ENCODE measurements at regions of chr1 and their contacts with region 1.

Region 1: DNA sequence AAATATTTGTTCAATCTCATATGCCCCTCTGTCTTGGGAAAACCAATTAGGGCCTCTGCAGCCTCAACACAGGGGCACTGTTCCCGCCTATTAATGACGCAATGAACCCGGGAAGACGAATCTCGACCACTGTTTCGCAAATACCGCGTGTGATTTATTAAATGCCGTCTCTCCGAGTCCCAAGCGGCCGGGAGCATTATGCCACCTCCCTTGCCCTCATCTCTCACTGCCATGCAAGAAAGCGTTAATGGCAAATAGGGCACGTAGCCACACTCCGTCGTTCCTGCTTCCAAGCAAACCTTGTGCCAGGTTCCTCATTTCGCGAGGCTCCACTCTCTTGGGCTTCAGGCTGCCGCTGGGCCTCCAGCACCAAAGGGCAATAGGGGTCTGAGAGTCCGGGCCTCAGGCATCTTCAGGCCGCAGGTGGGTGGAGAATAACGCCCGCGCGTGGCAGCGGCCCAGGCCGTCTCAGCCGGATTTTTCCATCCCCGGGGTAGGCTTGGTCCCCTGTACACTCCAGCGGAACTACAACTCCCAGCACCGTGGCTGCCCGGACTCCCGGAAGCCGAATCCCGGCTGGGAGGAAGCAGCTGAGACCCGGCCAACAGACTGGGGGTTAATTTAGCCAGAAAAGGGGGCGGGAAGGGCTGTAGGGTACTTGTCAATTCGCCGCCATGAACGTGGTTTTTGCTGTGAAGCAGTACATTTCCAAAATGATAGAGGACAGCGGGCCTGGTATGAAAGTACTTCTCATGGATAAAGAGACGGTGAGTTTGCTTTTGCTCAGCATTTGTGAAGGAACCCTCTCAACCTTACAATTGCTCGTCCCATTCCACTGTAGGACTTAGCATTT is at the start of gene VPS45:
- DNase-seq: peak; percentile 90 to 96 (median 94)
- H3K4me3 ChIP-seq: peak within 1 kb of the TSS; percentile 61 to 94 (median 80)
- H3K27ac ChIP-seq: peak within 1 kb of the TSS; percentile 59 to 87
- H3K4me1 ChIP-seq: peaks cover 7 to 40% (median 21%) of the 10 kb centered on the region in 4 experiments
- H3K27me3 ChIP-seq: no peaks in the 10 kb centered on the region

Region 2: GRCh38 chr1:149962123-149962548 is 105.3 kb before region 1 on chr1:
- CTCF ChIA-PET with region 1: interaction called, 13 read pairs
- POLR2A ChIA-PET with region 1: no interaction called
- DNase-seq: peak; percentile 76 to 85 (median 85)
- H3K4me3 ChIP-seq: no peak overlapping the region
- H3K27ac ChIP-seq: no peak overlapping the region
- H3K4me1 ChIP-seq: peaks cover 0 to 4% (median 0%) of the 10 kb centered on the region in 4 experiments
- H3K27me3 ChIP-seq: no peaks in the 10 kb centered on the region

Region 3: DNA sequence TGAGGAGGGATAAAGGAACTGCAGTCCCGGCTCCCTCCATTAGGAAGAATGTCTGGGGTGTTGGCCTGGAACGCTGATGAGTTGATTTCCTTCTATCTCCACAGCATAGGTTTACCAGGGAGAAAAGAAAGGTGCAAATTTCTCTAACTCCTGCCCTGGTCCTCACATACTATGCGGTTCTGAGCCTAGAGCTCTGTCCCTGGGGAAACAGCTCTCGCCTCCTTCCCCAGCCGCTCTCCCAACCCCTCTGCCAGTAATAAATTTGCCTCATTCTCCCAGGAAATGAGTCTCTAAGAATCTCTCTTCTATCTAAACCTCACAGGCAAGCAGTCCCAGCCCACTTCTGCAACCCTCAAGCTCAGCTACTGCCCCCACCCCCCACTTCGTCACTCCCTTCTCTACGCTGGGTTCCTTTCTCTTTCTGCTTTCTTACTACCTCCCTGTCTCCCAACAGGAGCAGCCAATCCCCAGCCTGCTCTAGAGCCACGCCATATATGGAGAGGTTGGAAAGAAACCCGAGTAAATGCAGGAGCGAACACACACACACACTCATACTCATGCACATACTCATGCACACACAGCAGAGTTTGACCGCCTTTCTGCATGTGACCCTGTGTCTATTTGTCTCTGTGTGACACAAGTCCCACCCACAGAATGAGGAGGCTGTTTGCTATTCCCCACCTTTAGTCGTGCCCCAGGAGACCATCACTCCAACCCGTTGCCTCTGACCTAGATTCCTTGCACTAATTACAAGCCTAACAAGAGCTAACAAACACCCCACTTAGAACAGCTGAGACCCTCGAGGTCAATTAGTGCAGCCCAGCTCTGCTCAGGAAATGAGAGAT is 95.7 kb after region 1 on chr1:
- CTCF ChIA-PET with region 1: interaction called, 174 read pairs
- POLR2A ChIA-PET with region 1: interaction called, 4 read pairs
- DNase-seq: peak; percentile 71 to 91 (median 91)
- H3K4me3 ChIP-seq: peak overlapping the region in 6 of 7 experiments; percentile 15 to 67 (median 44)
- H3K27ac ChIP-seq: peak overlapping the region in 1 of 2 experiments; percentile 74
- H3K4me1 ChIP-seq: peaks cover 43 to 79% (median 76%) of the 10 kb centered on the region in 4 experiments
- H3K27me3 ChIP-seq: no peaks in the 10 kb centered on the region

Region 4: GRCh38 chr1:150168960-150169601 is 101.7 kb after region 1 on chr1:
- CTCF ChIA-PET with region 1: interaction called, 174 read pairs
- POLR2A ChIA-PET with region 1: interaction called, 3 read pairs
- DNase-seq: peak; percentile 64 to 70 (median 65)
- H3K4me3 ChIP-seq: no peak overlapping the region
- H3K27ac ChIP-seq: no peak overlapping the region
- H3K4me1 ChIP-seq: peaks cover 9 to 21% (median 19%) of the 10 kb centered on the region in 4 experiments
- H3K27me3 ChIP-seq: no peaks in the 10 kb centered on the region

Region 5: GRCh38 chr1:150186789-150187559 is 119.6 kb after region 1 on chr1:
- CTCF ChIA-PET with region 1: interaction called, 28 read pairs
- POLR2A ChIA-PET with region 1: interaction called, 3 read pairs
- DNase-seq: peak; percentile 83 to 90 (median 88)
- H3K4me3 ChIP-seq: peak overlapping the region in 6 of 7 experiments; percentile 2 to 80 (median 56)
- H3K27ac ChIP-seq: peak overlapping the region; percentile 30 to 88
- H3K4me1 ChIP-seq: peaks cover 2 to 12% (median 9%) of the 10 kb centered on the region in 4 experiments
- H3K27me3 ChIP-seq: no peaks in the 10 kb centered on the region